Right ventricle myocardium inferior (tissue), 1 donor: ENCODE measurements at regions of chr20 and their contacts with region 1.

Region 1: DNA sequence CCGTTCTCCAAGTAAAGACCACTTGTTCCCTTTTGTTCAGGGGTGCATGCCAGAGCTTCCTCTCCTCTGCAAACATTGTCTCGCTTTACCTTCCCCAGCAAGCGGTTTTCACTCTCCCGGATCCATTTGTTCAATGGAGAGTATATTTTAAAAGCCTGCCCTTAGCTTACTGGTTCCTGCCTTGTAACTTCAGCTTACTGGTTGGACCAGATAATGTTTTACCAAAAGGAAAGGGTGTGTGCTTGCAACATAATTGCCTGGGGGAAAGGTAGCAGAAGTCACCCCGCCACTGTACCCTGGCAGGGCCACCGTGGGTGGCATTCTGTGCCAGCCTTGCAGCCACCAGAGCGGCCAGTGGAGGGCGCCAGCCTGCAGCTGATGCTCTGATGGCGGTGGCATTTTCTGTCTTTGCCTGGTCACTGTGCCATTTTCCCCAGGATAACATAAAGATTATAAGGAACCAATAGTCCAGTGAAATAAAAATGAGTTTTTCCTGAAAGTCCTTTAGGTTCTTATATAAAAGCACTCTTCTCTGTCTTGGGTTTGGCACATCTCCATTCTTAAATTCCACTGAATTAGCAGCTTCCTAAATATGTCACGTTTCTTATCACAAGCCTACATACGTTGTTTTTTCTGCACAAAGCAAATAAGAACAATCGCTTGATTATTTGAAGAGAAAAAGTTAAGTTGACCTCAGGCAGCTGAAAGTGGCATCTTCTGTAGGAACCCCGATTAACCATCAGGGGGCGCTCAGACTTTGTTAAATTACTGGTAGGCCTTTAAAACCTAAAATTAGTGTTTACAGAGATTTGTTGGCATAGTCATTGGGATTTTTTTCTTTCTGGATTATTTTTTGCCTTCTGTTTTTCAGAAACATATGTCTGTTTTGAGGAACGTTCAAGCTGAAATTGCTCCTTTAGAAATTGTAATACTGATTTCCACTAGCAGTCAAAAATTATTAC is 67.4 kb upstream of the XRN2 start:
- DNase-seq: peak; percentile 75
- ATAC-seq: no peak

Region 2: DNA sequence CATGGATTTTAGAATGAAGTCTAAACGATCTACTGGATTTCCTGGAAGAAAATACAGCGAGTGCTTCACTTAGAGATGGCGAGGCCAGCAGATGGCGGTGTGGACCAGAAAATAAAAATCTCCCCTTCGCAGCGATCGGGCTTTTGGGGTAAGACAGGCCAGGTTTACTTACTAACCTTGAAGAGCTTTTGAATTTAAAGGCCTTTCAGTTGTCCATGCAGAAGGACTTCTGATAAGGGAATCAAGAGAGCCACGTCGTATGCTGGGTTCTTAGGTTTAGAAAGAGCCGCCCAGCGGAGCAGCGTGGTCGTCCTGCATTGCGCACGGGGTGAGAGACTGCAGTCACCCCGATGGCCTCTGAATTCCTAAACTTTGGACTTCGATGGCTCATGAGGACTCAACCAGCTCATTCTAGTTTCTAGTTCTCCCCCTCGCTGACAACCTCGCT is 398.2 kb before region 1 on chr20:
- intact Hi-C with region 1: loop called (anchors 10 kb)
- DNase-seq: peak; percentile 73
- ATAC-seq: peak; percentile 54

Region 3: DNA sequence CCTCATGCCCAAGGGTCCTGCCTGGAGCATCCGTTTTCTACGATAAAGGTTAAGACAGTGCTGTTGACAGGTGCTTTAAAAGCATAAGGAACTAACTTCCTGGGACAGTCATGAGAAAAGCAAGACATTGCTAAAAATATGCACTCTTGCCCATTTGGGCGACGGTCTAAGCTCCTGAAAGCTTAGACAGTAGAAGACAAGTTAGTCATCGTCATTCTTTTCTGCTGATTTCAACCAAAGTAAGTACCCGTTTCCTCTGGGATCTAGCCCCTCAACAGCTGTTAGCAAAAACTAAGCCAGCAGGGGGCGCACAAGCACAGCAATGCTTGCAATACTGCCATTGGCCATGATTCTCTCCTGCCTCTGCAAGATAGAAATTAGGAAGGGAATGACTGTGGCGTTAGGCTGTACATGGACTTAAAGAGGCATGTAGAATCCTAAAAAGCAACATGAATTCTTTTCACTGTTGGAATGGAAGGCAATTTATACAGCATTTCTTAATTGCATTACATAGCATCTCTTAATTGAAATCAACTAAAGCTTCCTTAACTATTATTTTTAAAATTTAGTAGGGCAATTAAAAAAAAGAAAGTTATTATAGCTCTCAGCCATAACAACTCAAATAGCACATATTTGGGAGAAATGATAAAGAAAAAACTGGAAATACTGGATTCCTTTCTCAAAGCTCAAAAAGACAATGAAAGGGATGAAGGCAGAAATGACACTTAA is 375.5 kb before region 1 on chr20:
- intact Hi-C with region 1: loop called (anchors 10 kb)
- DNase-seq: peak; percentile 89
- ATAC-seq: peak; percentile 64

Region 4: DNA sequence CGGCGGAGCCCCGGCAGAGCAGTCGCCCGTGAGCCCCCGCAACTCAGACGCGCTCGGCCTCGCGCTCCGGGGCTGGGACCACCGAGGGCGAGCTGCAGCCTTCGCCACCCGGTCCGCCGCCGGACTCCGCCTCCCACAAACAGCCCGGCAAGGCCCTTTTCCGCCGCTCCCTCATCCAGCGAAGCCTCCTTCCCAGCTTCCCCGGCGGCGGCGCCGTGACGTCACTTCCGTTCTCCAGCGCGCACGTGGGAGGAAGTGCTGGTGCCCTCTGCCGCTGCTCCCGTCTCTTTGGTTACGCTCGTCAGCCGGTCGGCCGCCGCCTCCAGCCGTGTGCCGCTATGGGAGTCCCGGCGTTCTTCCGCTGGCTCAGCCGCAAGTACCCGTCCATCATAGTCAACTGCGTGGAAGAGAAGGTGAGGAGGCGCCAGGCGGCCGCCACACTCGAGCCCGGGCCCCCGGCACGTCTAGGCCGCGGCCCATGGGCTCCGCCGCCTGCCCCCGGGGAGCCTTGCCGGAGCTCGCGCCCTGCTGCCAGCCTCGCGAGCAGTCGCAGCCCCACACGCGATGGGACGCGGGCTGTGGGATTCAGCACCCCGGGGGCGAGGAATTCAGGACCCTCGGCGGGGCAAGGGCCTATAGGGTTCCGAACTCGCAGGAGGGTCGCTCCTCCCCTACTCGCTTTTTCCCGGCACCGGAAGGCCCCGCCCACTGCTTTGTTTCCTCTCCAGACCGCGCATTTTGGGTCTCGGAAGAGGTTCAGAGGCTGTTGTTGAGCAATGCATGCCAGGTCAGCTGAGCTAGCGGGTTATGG is 67.5 kb after region 1 on chr20 and contains the start of gene XRN2:
- intact Hi-C with region 1: loop called (anchors 5 kb)
- DNase-seq: peak; percentile 99
- ATAC-seq: peak; percentile 99
- total RNA-seq, gene XRN2: 30.9 TPM

Region 5: DNA sequence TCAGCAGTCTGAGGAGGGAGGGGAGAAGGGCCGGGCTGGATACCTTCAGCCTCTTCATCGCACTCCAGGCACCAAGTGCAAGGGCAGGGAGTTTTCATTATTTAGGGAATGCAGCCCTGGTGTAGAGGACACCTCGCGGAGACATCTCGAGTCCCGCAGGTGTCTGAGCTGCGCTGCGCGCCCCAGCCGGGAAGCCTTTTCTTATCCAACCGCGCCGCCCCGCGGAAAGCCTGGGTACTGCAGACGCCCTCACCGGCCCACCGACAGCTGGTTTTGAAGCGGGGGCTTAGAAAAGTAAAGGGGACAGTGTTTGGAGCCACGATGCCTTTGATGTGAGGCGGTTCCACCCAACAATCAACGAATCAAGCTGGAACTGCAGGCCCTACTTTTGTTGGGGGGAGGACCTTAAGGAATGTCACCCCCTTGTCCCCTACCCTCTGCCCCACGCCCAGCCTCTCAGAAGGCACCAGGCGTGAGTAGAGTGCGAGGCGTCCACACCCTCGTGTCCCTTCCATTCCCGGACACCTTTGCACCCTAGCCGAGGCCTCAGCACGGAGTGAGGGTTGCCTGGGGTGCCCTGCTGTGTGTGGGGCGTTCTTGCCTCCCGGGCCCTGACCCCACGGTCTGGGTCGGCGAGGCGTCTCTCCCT is 269.5 kb after region 1 on chr20:
- intact Hi-C with region 1: loop called (anchors 1 kb)
- DNase-seq: peak; percentile 93
- ATAC-seq: peak; percentile 58

Region 6: GRCh38 chr20:21571841-21572690 is 336.3 kb after region 1 on chr20:
- intact Hi-C with region 1: loop called (anchors 5 kb)
- DNase-seq: no peak
- ATAC-seq: no peak